ENCODE measurements at regions of chr15 and their contacts with region 1.

Region 1: GRCh38 chr15:97234851-97235610 is 725.5 kb upstream of the ARRDC4 start:
- DNase-seq: no peak
- ATAC-seq: no peak
- H3K4me3 Mint-ChIP-seq: no peak overlapping the region
- H3K27ac Mint-ChIP-seq: no peak overlapping the region
- H3K4me1 Mint-ChIP-seq: no peaks in the 10 kb centered on the region
- H3K27me3 Mint-ChIP-seq: no peaks in the 10 kb centered on the region
- CTCF ChIP-seq: no peak

Region 2: GRCh38 chr15:97224191-97224641 is 10.8 kb before region 1 on chr15:
- CTCF ChIA-PET with region 1: no interaction called
- POLR2A ChIA-PET with region 1: no interaction called
- intact Hi-C with region 1: no loop called
- DNase-seq: no peak
- ATAC-seq: no peak
- H3K4me3 Mint-ChIP-seq: no peak overlapping the region
- H3K27ac Mint-ChIP-seq: no peak overlapping the region
- H3K4me1 Mint-ChIP-seq: no peaks in the 10 kb centered on the region
- H3K27me3 Mint-ChIP-seq: no peaks in the 10 kb centered on the region
- CTCF ChIP-seq: no peak

Region 3: GRCh38 chr15:97316362-97316761 is 81.3 kb after region 1 on chr15:
- CTCF ChIA-PET with region 1: no interaction called
- POLR2A ChIA-PET with region 1: no interaction called
- intact Hi-C with region 1: loop called (anchors 10 kb)
- DNase-seq: no peak
- ATAC-seq: no peak
- H3K4me3 Mint-ChIP-seq: no peak overlapping the region
- H3K27ac Mint-ChIP-seq: no peak overlapping the region
- H3K4me1 Mint-ChIP-seq: no peaks in the 10 kb centered on the region
- H3K27me3 Mint-ChIP-seq: no peaks in the 10 kb centered on the region
- CTCF ChIP-seq: no peak

Measured in activated B cell treated with CpG ODN at 0.5 μM for 24 hours (primary cell).